ENCODE measurements at regions of chrX and their contacts with region 1.

Region 1: DNA sequence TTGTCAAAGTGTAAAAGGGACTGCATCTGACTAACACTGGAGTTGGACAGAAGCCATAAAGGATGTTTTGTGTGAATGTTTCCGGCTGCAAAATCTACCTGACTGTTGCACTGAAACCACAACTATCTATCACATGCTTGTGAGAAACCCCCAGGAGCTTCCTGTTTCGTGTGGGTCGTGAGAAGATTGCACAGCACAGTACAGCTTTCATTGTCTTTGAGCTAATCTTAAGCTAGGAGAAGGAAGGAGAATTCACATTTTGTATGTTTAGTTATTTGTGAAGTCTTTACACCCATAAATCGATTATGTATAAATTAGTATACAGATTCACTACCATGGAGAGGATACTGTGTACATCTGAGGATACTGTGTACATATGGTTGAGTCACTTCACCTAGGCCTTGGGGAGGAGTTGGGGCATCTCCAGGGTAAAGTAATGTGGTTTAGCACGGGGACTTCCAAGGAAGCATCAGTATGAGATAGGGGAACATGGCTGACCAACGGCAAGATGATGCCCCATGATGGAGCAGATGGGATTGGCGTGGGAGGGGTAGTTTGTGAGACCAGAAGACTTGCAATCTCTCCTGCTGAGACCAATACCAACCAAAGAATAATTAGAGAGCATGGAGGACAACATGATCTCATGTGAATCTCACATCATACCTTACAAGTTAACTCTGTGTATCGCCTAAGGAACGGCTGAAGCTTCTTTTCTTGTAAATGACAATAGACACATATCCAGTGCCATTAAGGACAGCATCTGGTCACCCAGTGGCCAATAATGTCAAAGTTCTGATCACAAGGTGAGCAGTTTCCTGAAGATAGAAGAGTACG is 43.1 kb upstream of the FAM9C start:
- DNase-seq: no peak
- ATAC-seq: peak; percentile 65
- H3K4me3 Mint-ChIP-seq: peak overlapping the region; percentile 67
- H3K27ac Mint-ChIP-seq: peak overlapping the region; percentile 98
- H3K4me1 Mint-ChIP-seq: peaks cover 96% of the 10 kb centered on the region
- H3K27me3 Mint-ChIP-seq: no peaks in the 10 kb centered on the region
- CTCF ChIP-seq: no peak

Region 2: GRCh38 chrX:12901486-12901885 is 186.1 kb before region 1 on chrX:
- CTCF ChIA-PET with region 1: no interaction called
- POLR2A ChIA-PET with region 1: no interaction called
- intact Hi-C with region 1: no loop called
- DNase-seq: peak; percentile 41
- ATAC-seq: peak; percentile 71
- H3K4me3 Mint-ChIP-seq: no peak overlapping the region
- H3K27ac Mint-ChIP-seq: peak overlapping the region; percentile 60
- H3K4me1 Mint-ChIP-seq: peaks cover 4% of the 10 kb centered on the region
- H3K27me3 Mint-ChIP-seq: no peaks in the 10 kb centered on the region
- CTCF ChIP-seq: no peak

Region 3: DNA sequence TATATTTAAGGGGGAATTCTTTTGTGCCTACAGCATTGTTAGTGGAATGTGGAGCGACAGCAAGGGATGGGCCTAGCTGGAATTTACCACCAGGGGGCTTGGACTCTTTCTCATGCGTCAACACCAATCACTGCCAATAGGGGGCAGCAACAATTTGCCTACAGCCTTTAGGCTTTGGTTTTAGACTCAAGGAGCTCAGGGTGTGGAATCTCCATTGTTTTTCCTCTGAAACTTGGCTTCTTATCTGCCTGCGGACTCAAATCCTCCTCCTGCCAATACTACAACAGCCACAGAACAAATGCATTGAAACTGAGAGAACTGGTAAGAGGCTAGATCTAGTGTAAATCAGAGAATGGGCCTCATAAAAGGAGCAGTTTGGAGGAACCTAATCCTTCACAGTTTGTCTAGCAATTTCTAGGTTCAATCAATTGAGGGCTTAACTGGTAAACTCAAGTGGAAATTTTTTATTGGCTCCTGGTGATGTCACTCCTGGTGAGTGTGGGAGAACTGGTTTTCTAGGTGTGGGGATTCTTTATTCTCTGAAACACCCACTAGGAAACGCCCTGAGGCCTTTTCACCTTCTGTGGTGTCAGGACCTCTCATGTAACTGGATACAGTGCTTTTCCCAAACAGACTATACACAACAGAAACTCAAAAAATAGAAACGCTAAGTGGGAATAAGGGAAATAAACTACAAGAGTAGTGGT is 140.5 kb before region 1 on chrX:
- CTCF ChIA-PET with region 1: interaction called, 142 read pairs
- POLR2A ChIA-PET with region 1: interaction called, 87 read pairs
- intact Hi-C with region 1: loop called (anchors 1 kb)
- DNase-seq: peak; percentile 47
- ATAC-seq: peak; percentile 19
- H3K4me3 Mint-ChIP-seq: peak overlapping the region; percentile 62
- H3K27ac Mint-ChIP-seq: peak overlapping the region; percentile 92
- H3K4me1 Mint-ChIP-seq: peaks cover 58% of the 10 kb centered on the region
- H3K27me3 Mint-ChIP-seq: no peaks in the 10 kb centered on the region
- CTCF ChIP-seq: no peak

Region 4: DNA sequence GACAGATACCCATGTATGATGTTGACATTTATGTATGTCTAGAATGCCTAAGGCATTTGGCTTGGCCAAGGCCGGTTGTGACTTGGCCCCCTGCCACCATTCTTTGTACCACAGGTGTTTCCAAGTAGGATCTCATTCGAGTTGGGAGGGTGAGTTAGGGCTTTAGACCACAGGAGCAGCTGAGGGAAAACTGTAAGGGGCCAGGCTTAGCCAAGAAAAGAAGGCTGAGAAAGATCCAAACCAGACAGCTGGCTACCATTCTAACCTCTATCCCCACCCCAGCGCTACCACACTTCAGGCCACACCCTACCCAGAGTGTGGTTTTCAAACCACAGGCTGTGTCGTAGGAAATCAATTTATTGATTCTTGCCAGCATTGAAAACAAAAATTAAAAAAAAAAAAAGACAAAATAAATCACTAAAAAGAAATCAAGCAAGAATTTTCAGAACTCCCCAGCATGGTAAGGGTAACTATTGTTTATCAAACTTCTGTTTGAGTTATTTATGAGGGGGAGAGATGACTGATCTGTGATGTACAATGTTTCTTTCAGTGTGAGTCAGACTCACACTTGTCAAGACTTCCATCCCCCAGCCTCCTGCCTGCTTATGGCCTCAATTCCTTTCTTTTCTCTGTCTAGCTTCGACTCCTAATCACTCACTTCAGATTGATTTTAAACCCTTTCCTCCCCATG is 102.8 kb before region 1 on chrX:
- CTCF ChIA-PET with region 1: interaction called, 10 read pairs
- POLR2A ChIA-PET with region 1: interaction called, 847 read pairs
- intact Hi-C with region 1: no loop called
- DNase-seq: no peak
- ATAC-seq: peak; percentile 79
- H3K4me3 Mint-ChIP-seq: peak overlapping the region; percentile 53
- H3K27ac Mint-ChIP-seq: peak overlapping the region; percentile 91
- H3K4me1 Mint-ChIP-seq: peaks cover 62% of the 10 kb centered on the region
- H3K27me3 Mint-ChIP-seq: no peaks in the 10 kb centered on the region
- CTCF ChIP-seq: no peak

Region 5: GRCh38 chrX:13013363-13014110 is 74.0 kb before region 1 on chrX:
- CTCF ChIA-PET with region 1: no interaction called
- POLR2A ChIA-PET with region 1: interaction called, 179 read pairs
- intact Hi-C with region 1: no loop called
- DNase-seq: no peak
- ATAC-seq: peak; percentile 90
- H3K4me3 Mint-ChIP-seq: peak overlapping the region; percentile 36
- H3K27ac Mint-ChIP-seq: peak overlapping the region; percentile 64
- H3K4me1 Mint-ChIP-seq: peaks cover 65% of the 10 kb centered on the region
- H3K27me3 Mint-ChIP-seq: no peaks in the 10 kb centered on the region
- CTCF ChIP-seq: no peak

Region 6: DNA sequence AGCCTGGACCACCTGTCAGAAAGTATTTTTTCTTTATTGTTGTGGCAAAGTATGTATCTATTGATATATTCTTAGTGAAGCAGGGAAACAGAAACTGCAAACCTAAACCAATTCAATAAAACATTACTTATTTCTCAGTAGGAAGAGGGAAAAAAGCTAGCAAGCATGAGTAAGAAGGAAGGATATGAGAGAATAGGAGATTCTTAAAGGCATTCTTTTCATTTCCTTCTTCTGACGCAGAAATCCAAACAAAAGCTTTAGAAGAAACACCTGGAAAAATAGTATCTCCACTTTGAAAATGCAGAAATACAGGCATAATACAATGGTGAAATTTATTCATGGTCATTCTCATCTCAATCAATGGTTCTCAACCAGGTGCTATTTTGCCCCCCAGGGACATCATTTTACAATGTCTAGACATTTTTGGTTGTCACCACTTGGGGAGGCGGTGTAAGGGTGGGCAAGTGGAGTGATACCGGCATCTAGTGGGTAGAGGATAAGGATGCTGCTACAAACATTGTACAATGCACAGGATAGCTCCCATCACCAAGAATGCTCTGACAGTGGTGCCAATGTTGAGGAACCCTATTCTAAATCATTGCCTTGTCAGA is 254.1 kb after region 1 on chrX:
- CTCF ChIA-PET with region 1: no interaction called
- POLR2A ChIA-PET with region 1: no interaction called
- intact Hi-C with region 1: loop called (anchors 5 kb)
- DNase-seq: no peak
- ATAC-seq: no peak
- H3K4me3 Mint-ChIP-seq: no peak overlapping the region
- H3K27ac Mint-ChIP-seq: no peak overlapping the region
- H3K4me1 Mint-ChIP-seq: peaks cover 20% of the 10 kb centered on the region
- H3K27me3 Mint-ChIP-seq: no peaks in the 10 kb centered on the region
- CTCF ChIP-seq: no peak

Region 7: DNA sequence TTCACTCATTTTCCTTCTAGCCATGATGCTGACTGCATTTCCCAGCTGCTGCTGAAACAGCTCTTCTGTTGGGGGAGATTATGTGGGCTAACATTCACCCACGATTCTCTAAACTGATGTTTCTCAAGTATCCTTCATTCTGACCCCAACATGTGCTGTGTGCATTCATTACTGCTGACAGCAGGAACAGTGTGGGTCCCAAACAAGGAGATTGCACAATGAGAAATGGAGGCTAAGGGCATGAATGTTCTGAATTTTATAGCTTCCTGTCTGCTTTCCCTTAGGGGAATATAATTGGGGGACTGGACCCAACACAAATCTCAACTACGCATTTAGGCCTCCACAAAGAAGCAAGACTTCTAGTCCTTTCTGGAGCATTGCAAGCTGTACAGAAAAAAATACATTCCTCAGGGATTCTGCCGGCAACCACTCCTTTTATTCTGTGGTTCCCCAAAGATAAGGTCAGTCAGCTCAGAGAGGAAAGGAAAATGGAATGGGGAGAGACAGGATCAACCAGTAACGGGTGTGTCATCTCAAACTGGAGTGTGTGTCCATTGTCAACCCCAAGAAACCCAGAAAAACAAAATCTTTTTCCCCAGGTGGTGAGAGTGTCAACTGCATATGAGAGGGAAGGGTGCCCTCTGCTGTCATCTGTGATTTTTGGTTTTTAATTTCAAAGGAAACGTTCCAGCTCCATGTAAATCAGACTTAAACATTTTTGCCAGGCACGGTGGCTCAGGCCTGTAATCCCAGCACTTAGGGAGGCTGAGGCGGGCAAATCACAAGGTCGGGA is 400.4 kb after region 1 on chrX:
- CTCF ChIA-PET with region 1: interaction called, 49 read pairs
- POLR2A ChIA-PET with region 1: interaction called, 15 read pairs
- intact Hi-C with region 1: loop called (anchors 1 kb)
- DNase-seq: no peak
- ATAC-seq: peak; percentile 59
- H3K4me3 Mint-ChIP-seq: no peak overlapping the region
- H3K27ac Mint-ChIP-seq: peak overlapping the region; percentile 89
- H3K4me1 Mint-ChIP-seq: peaks cover 21% of the 10 kb centered on the region
- H3K27me3 Mint-ChIP-seq: no peaks in the 10 kb centered on the region
- CTCF ChIP-seq: no peak

Region 8: DNA sequence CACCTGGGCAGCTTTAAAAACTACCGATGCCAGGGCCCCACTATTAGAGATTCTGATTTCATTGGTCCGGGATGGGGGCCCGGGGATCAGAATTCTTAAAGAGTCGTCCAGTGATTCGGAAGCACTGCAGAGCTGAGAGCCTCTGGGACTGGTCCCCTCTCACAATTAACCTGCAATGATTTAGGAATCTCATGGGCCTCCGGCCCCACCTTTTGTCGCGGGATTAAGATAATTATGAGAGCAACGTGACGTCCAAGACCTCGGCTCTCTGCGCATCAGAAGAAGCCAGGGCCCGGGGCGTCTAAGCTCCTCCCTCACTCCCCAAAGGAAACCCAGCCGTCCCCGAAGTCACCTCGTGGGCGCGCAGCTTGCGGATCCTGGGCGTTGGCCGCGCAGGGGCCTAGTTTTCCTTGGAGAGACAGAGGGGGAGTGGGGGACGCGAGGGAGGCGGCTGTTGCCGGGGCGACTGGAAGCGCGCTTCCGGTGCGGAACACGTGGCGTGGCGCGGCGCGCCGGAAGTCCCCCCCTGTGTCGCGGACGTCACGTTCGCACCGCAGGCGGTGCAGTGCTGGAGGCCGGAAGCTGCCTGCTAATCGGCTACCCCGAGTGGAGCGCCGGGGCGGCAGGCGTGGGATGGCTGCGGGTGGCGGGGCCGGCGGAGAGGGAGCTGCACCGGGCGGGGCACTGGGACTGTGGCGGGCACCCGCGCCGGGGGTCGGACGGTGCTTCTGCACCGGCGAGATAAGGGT is 942.1 kb after region 1 on chrX and contains the start of gene GEMIN8:
- CTCF ChIA-PET with region 1: no interaction called
- POLR2A ChIA-PET with region 1: no interaction called
- intact Hi-C with region 1: loop called (anchors 2 kb)
- DNase-seq: peak; percentile 76
- ATAC-seq: peak; percentile 91
- H3K4me3 Mint-ChIP-seq: peak within 1 kb of the TSS; percentile 94
- H3K27ac Mint-ChIP-seq: peak within 1 kb of the TSS; percentile 97
- H3K4me1 Mint-ChIP-seq: peaks cover 30% of the 10 kb centered on the region
- H3K27me3 Mint-ChIP-seq: no peaks in the 10 kb centered on the region
- CTCF ChIP-seq: no peak
- total RNA-seq, gene GEMIN8: 19.3 and 19.9 TPM in 2 replicates

Measured in activated B cell treated with CpG ODN at 0.5 μM for 24 hours (primary cell).